Naive thymus-derived CD4-positive, alpha-beta T cell (primary cell): ENCODE measurements at regions of chr15 and their contacts with region 1.

Region 1: DNA sequence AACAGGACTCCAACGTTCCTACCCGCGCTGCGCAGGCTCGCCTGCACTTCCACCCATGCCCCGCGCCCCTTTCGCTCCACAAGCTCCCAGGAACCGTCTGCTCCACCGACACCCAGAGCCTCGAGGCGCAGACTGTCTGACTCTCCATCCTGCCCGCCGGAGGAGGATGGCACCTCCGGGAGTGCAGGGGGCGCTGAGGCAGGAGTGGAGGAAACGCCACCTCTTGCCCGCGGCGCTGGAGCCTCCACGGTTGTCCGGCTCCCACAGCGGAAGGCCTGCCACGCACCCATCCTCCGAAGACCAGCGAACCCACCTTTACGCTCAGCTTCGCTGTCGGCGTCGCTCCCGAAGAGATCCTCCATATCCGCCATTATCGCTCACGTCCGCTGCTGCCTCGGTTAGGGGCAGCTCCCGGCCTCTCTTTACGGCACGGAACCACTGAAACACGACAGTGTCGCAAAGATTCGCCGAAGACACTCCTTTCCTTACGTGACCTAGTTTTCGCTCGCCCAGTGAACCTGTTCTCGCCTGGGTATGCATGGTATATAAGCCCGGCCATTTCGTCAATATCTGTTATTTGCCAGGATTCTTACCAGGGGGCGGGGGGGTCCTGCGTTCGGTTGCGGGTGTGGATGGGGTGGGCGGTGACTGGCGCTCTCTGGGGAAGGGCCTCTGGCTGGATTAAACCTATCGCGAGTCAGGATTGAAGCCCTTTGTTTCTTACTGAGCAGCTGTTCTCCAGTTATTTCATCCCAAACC is at the start of gene LEO1:
- DNase-seq: peak; percentile 59 to 94 (median 91)
- ATAC-seq: peak; percentile 98
- H3K4me3 ChIP-seq: peak within 1 kb of the TSS; percentile 95
- H3K4me3 Mint-ChIP-seq: peak within 1 kb of the TSS; percentile 97 to 99 (median 98)
- H3K27ac ChIP-seq: peak within 1 kb of the TSS; percentile 79
- H3K27ac Mint-ChIP-seq: peak within 1 kb of the TSS; percentile 94 to 100 (median 98)
- H3K4me1 ChIP-seq: peaks cover 11 to 13% of the 10 kb centered on the region in 2 donors
- H3K4me1 Mint-ChIP-seq: peaks cover 10 to 33% (median 26%) of the 10 kb centered on the region in 7 donors
- H3K27me3 ChIP-seq: no peaks in the 10 kb centered on the region
- H3K27me3 Mint-ChIP-seq: peaks cover 0 to 3% (median 0%) of the 10 kb centered on the region in 5 donors
- total RNA-seq, gene LEO1: 9.2 to 30.1 (median 19.3) TPM

Region 2: GRCh38 chr15:52005748-52006701 is 34.5 kb after region 1 on chr15:
- CTCF ChIA-PET with region 1: no interaction called
- POLR2A ChIA-PET with region 1: no interaction called
- intact Hi-C with region 1: loop called in 1 of 2 experiments (anchors 5 kb)
- DNase-seq: no peak
- ATAC-seq: no peak
- H3K4me3 ChIP-seq: no peak overlapping the region
- H3K4me3 Mint-ChIP-seq: peak overlapping the region in 1 of 10 donors; percentile 54
- H3K27ac ChIP-seq: no peak overlapping the region
- H3K27ac Mint-ChIP-seq: peak overlapping the region in 1 of 9 donors; percentile 82
- H3K4me1 ChIP-seq: peaks cover 0 to 9% of the 10 kb centered on the region in 2 donors
- H3K4me1 Mint-ChIP-seq: peaks cover 9 to 58% (median 16%) of the 10 kb centered on the region in 7 donors
- H3K27me3 ChIP-seq: no peaks in the 10 kb centered on the region
- H3K27me3 Mint-ChIP-seq: peaks cover 0 to 2% (median 0%) of the 10 kb centered on the region in 5 donors

Region 3: GRCh38 chr15:52018693-52019387 is 47.3 kb after region 1 on chr15 and contains the start of gene MAPK6:
- CTCF ChIA-PET with region 1: interaction called, 4 read pairs
- POLR2A ChIA-PET with region 1: interaction called, 11 read pairs
- intact Hi-C with region 1: loop called (anchors 1 kb)
- DNase-seq: peak; percentile 91 to 96 (median 94)
- ATAC-seq: peak; percentile 95
- H3K4me3 ChIP-seq: peak within 1 kb of the TSS; percentile 79
- H3K4me3 Mint-ChIP-seq: peak within 1 kb of the TSS; percentile 90 to 99 (median 96)
- H3K27ac ChIP-seq: peak within 1 kb of the TSS; percentile 88
- H3K27ac Mint-ChIP-seq: peak within 1 kb of the TSS; percentile 88 to 100 (median 98)
- H3K4me1 ChIP-seq: peaks cover 9 to 29% of the 10 kb centered on the region in 2 donors
- H3K4me1 Mint-ChIP-seq: peaks cover 32 to 50% (median 39%) of the 10 kb centered on the region in 7 donors
- H3K27me3 ChIP-seq: no peaks in the 10 kb centered on the region
- H3K27me3 Mint-ChIP-seq: peaks cover 0 to 15% (median 0%) of the 10 kb centered on the region in 5 donors
- total RNA-seq, gene MAPK6: 19.2 to 44.1 (median 25.3) TPM

Region 4: GRCh38 chr15:52039925-52040781 is 68.6 kb after region 1 on chr15:
- CTCF ChIA-PET with region 1: no interaction called
- POLR2A ChIA-PET with region 1: interaction called, 11 read pairs
- intact Hi-C with region 1: no loop called
- DNase-seq: no peak
- ATAC-seq: peak; percentile 51
- H3K4me3 ChIP-seq: no peak overlapping the region
- H3K4me3 Mint-ChIP-seq: peak overlapping the region in 7 of 10 donors; percentile 4 to 45 (median 26)
- H3K27ac ChIP-seq: peak overlapping the region; percentile 32
- H3K27ac Mint-ChIP-seq: peak overlapping the region; percentile 0 to 91 (median 42)
- H3K4me1 ChIP-seq: peaks cover 4 to 16% of the 10 kb centered on the region in 2 donors
- H3K4me1 Mint-ChIP-seq: peaks cover 34 to 87% (median 64%) of the 10 kb centered on the region in 7 donors
- H3K27me3 ChIP-seq: no peaks in the 10 kb centered on the region
- H3K27me3 Mint-ChIP-seq: no peaks in the 10 kb centered on the region

Region 5: GRCh38 chr15:52050416-52050815 is 78.9 kb after region 1 on chr15:
- CTCF ChIA-PET with region 1: interaction called, 4 read pairs
- POLR2A ChIA-PET with region 1: interaction called, 11 read pairs
- intact Hi-C with region 1: loop called in 1 of 2 experiments (anchors 1 kb)
- DNase-seq: no peak
- ATAC-seq: no peak
- H3K4me3 ChIP-seq: no peak overlapping the region
- H3K4me3 Mint-ChIP-seq: no peak overlapping the region
- H3K27ac ChIP-seq: no peak overlapping the region
- H3K27ac Mint-ChIP-seq: no peak overlapping the region
- H3K4me1 ChIP-seq: peaks cover 7 to 12% of the 10 kb centered on the region in 2 donors
- H3K4me1 Mint-ChIP-seq: peaks cover 17 to 29% (median 22%) of the 10 kb centered on the region in 7 donors
- H3K27me3 ChIP-seq: no peaks in the 10 kb centered on the region
- H3K27me3 Mint-ChIP-seq: no peaks in the 10 kb centered on the region

Region 6: GRCh38 chr15:52078876-52079700 is 107.5 kb after region 1 on chr15:
- CTCF ChIA-PET with region 1: interaction called, 13 read pairs
- POLR2A ChIA-PET with region 1: interaction called, 3 read pairs
- intact Hi-C with region 1: no loop called
- DNase-seq: peak; percentile 58 to 82 (median 75)
- ATAC-seq: peak; percentile 87
- H3K4me3 ChIP-seq: no peak overlapping the region
- H3K4me3 Mint-ChIP-seq: no peak overlapping the region
- H3K27ac ChIP-seq: no peak overlapping the region
- H3K27ac Mint-ChIP-seq: peak overlapping the region in 1 of 9 donors; percentile 49
- H3K4me1 ChIP-seq: peaks cover 0 to 13% of the 10 kb centered on the region in 2 donors
- H3K4me1 Mint-ChIP-seq: peaks cover 0 to 26% (median 10%) of the 10 kb centered on the region in 7 donors
- H3K27me3 ChIP-seq: no peaks in the 10 kb centered on the region
- H3K27me3 Mint-ChIP-seq: peaks cover 0 to 7% (median 0%) of the 10 kb centered on the region in 5 donors

Region 7: GRCh38 chr15:52179278-52180195 is 208.0 kb after region 1 on chr15:
- CTCF ChIA-PET with region 1: no interaction called
- POLR2A ChIA-PET with region 1: interaction called, 14 read pairs
- intact Hi-C with region 1: loop called in 1 of 2 experiments (anchors 1 kb)
- DNase-seq: peak; percentile 79 to 92 (median 91)
- ATAC-seq: peak; percentile 91
- H3K4me3 ChIP-seq: peak overlapping the region; percentile 98
- H3K4me3 Mint-ChIP-seq: peak overlapping the region; percentile 86 to 100 (median 94)
- H3K27ac ChIP-seq: peak overlapping the region; percentile 95
- H3K27ac Mint-ChIP-seq: peak overlapping the region; percentile 90 to 99 (median 98)
- H3K4me1 ChIP-seq: peaks cover 19 to 20% of the 10 kb centered on the region in 2 donors
- H3K4me1 Mint-ChIP-seq: peaks cover 14 to 50% (median 40%) of the 10 kb centered on the region in 7 donors
- H3K27me3 ChIP-seq: no peaks in the 10 kb centered on the region
- H3K27me3 Mint-ChIP-seq: no peaks in the 10 kb centered on the region